ENCODE measurements at regions of chr1 and their contacts with region 1.

Region 1: GRCh38 chr1:52552505-52553361 is at the start of gene TUT4:
- DNase-seq: peak; percentile 60 to 85
- ATAC-seq: peak; percentile 41 to 62 (median 51)
- H3K4me3 ChIP-seq: peak within 1 kb of the TSS; percentile 99
- H3K4me3 Mint-ChIP-seq: no peak within 1 kb of the TSS
- H3K27ac ChIP-seq: peak within 1 kb of the TSS; percentile 95
- H3K27ac Mint-ChIP-seq: peak within 1 kb of the TSS in 1 of 2 donors; percentile 72
- H3K4me1 ChIP-seq: peaks cover 13% of the 10 kb centered on the region
- H3K4me1 Mint-ChIP-seq: peaks cover 19 to 24% of the 10 kb centered on the region in 2 donors
- H3K27me3 ChIP-seq: no peaks in the 10 kb centered on the region
- H3K27me3 Mint-ChIP-seq: no peaks in the 10 kb centered on the region
- CTCF ChIP-seq: no peak
- total RNA-seq, gene TUT4: 124 to 156 (median 125) TPM

Region 2: GRCh38 chr1:52365746-52366516 is 186.8 kb before region 1 on chr1 and contains the start of gene CC2D1B:
- intact Hi-C with region 1: loop called (anchors 1 kb)
- DNase-seq: peak; percentile 99 to 100
- ATAC-seq: peak; percentile 86 to 96 (median 91)
- H3K4me3 ChIP-seq: peak within 1 kb of the TSS; percentile 75
- H3K4me3 Mint-ChIP-seq: peak within 1 kb of the TSS; percentile 90
- H3K27ac ChIP-seq: peak within 1 kb of the TSS; percentile 92
- H3K27ac Mint-ChIP-seq: peak within 1 kb of the TSS; percentile 95 to 99
- H3K4me1 ChIP-seq: peaks cover 30% of the 10 kb centered on the region
- H3K4me1 Mint-ChIP-seq: peaks cover 15 to 39% of the 10 kb centered on the region in 2 donors
- H3K27me3 ChIP-seq: no peaks in the 10 kb centered on the region
- H3K27me3 Mint-ChIP-seq: peaks cover 0 to 4% of the 10 kb centered on the region in 2 donors
- CTCF ChIP-seq: no peak
- total RNA-seq, gene CC2D1B: 61.4 to 78.4 (median 68.8) TPM

Region 3: GRCh38 chr1:52460694-52461093 is 92.0 kb before region 1 on chr1:
- intact Hi-C with region 1: no loop called
- DNase-seq: no peak
- ATAC-seq: no peak
- H3K4me3 ChIP-seq: no peak overlapping the region
- H3K4me3 Mint-ChIP-seq: no peak overlapping the region
- H3K27ac ChIP-seq: no peak overlapping the region
- H3K27ac Mint-ChIP-seq: no peak overlapping the region
- H3K4me1 ChIP-seq: no peaks in the 10 kb centered on the region
- H3K4me1 Mint-ChIP-seq: no peaks in the 10 kb centered on the region
- H3K27me3 ChIP-seq: no peaks in the 10 kb centered on the region
- H3K27me3 Mint-ChIP-seq: no peaks in the 10 kb centered on the region
- CTCF ChIP-seq: no peak

Region 4: DNA sequence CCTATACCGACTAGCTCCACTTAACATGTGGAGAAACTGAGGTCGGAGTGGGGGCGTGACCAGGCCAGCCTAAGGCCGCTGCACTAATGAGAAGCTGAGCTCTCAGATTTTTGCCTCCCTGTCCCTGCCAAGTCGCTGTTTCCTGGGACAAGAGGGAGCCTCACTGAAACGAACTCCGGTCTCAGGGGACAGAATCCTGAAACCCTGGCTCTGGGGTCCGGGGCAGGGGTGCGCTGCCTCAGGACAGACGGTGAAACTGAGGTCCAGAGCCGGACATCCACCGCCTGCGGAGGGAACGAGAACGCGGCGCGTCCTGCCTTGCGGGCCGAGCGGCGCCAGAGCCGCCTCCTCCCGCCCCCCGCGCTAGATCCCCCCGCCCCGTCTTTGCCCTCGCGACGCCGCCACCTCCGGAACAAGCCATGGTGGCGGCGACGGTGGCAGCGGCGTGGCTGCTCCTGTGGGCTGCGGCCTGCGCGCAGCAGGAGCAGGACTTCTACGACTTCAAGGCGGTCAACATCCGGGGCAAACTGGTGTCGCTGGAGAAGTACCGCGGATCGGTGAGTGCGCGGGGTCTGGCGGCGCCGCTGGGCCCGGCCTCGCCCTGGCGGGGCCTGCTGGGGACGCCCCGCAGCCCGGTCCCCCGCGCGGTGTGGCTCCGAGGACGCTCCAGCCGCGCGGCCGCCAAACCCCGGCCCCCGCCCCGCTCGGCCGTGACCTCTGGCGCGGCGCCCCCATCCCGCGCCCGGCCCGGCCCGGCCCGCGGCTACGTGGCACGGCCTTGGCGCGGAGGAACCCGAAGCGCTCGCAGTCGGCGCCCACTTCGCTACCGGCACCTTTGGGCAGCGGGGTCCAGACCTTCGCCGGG is 49.5 kb after region 1 on chr1 and contains the start of gene GPX7:
- intact Hi-C with region 1: loop called (anchors 2 kb)
- DNase-seq: peak; percentile 61 to 81
- ATAC-seq: peak; percentile 76 to 84 (median 81)
- H3K4me3 ChIP-seq: peak within 1 kb of the TSS; percentile 52
- H3K4me3 Mint-ChIP-seq: peak within 1 kb of the TSS; percentile 87
- H3K27ac ChIP-seq: peak within 1 kb of the TSS; percentile 67
- H3K27ac Mint-ChIP-seq: peak within 1 kb of the TSS; percentile 70 to 81
- H3K4me1 ChIP-seq: peaks cover 26% of the 10 kb centered on the region
- H3K4me1 Mint-ChIP-seq: peaks cover 39 to 59% of the 10 kb centered on the region in 2 donors
- H3K27me3 ChIP-seq: no peaks in the 10 kb centered on the region
- H3K27me3 Mint-ChIP-seq: no peaks in the 10 kb centered on the region
- CTCF ChIP-seq: no peak
- total RNA-seq, gene GPX7: 9.7 to 10.6 (median 10.2) TPM

Region 5: GRCh38 chr1:52636721-52637695 is 84.3 kb after region 1 on chr1:
- intact Hi-C with region 1: loop called (anchors 1 kb)
- DNase-seq: peak; percentile 56 to 87
- ATAC-seq: peak; percentile 49 to 80 (median 72)
- H3K4me3 ChIP-seq: no peak overlapping the region
- H3K4me3 Mint-ChIP-seq: peak overlapping the region; percentile 82
- H3K27ac ChIP-seq: peak overlapping the region; percentile 97
- H3K27ac Mint-ChIP-seq: peak overlapping the region; percentile 96 to 98
- H3K4me1 ChIP-seq: peaks cover 83% of the 10 kb centered on the region
- H3K4me1 Mint-ChIP-seq: peaks cover 76 to 88% of the 10 kb centered on the region in 2 donors
- H3K27me3 ChIP-seq: no peaks in the 10 kb centered on the region
- H3K27me3 Mint-ChIP-seq: no peaks in the 10 kb centered on the region
- CTCF ChIP-seq: no peak

Region 6: GRCh38 chr1:52683367-52683940 is 130.7 kb after region 1 on chr1:
- intact Hi-C with region 1: loop called (anchors 1 kb)
- DNase-seq: no peak
- ATAC-seq: no peak
- H3K4me3 ChIP-seq: no peak overlapping the region
- H3K4me3 Mint-ChIP-seq: no peak overlapping the region
- H3K27ac ChIP-seq: no peak overlapping the region
- H3K27ac Mint-ChIP-seq: peak overlapping the region in 1 of 2 donors; percentile 28
- H3K4me1 ChIP-seq: peaks cover 11% of the 10 kb centered on the region
- H3K4me1 Mint-ChIP-seq: peaks cover 7 to 14% of the 10 kb centered on the region in 2 donors
- H3K27me3 ChIP-seq: no peaks in the 10 kb centered on the region
- H3K27me3 Mint-ChIP-seq: no peaks in the 10 kb centered on the region
- CTCF ChIP-seq: no peak

Region 7: DNA sequence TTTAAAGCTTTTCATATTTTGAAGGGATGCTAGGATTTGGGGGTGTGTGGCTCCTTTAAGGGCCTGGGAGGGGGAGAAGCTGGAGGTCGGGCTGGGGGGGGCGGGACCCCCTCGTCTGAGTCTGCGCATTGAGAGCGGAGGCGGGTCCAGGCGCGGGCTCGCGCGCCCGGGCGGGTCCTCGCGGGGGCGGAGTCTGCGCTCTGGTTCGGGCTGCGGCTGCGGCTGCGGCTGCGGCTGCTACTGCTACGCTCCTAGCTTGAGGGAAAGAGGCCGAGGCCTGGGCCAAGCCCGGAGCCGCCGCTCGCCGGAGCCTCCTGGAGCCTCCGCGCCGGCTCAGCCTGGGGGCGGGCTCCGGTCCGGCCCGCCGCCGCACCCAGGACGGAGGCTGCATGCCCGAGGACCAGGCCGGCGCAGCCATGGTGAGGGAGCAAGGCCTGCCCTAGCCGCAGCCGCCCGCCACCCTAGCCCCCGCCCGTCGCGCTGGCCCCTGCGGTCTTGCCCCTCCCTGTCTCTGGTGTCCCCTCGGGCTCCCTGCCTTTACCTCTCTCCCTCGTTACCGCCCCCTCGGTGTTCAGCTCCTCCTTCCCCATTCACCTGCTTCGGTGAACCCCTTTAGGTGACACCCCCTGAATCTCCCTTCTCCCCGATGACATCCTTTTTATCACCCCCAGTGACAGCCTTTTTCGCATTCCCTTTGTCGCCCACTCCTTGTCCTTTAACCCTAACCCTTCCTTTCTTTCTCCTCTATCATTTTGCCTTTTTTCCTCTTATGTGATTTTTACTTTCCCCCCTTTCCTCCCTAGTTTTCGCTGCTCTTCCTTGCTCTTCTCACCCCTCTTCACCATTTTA is 173.8 kb after region 1 on chr1 and contains the start of gene ZYG11B:
- intact Hi-C with region 1: loop called (anchors 5 kb)
- DNase-seq: peak; percentile 89 to 95
- ATAC-seq: peak; percentile 93 to 96 (median 95)
- H3K4me3 ChIP-seq: peak within 1 kb of the TSS; percentile 74
- H3K4me3 Mint-ChIP-seq: peak within 1 kb of the TSS; percentile 89
- H3K27ac ChIP-seq: peak within 1 kb of the TSS; percentile 26
- H3K27ac Mint-ChIP-seq: peak within 1 kb of the TSS; percentile 14 to 93
- H3K4me1 ChIP-seq: peaks cover 12% of the 10 kb centered on the region
- H3K4me1 Mint-ChIP-seq: peaks cover 23 to 29% of the 10 kb centered on the region in 2 donors
- H3K27me3 ChIP-seq: no peaks in the 10 kb centered on the region
- H3K27me3 Mint-ChIP-seq: peaks cover 0 to 10% of the 10 kb centered on the region in 2 donors
- CTCF ChIP-seq: no peak
- total RNA-seq, gene ZYG11B: 7.4 to 11.8 (median 10.7) TPM